ENCODE measurements at regions of chr6 and their contacts with region 1.

Region 1: GRCh38 chr6:39166189-39166911 is 51.4 kb upstream of the SAYSD1 start:
- DNase-seq: peak; percentile 28
- ATAC-seq: peak; percentile 96
- H3K4me3 ChIP-seq: no peak overlapping the region
- H3K27ac ChIP-seq: no peak overlapping the region
- H3K4me1 ChIP-seq: no peaks in the 10 kb centered on the region
- H3K27me3 ChIP-seq: no peaks in the 10 kb centered on the region
- CTCF ChIP-seq: peak; percentile 94

Region 2: DNA sequence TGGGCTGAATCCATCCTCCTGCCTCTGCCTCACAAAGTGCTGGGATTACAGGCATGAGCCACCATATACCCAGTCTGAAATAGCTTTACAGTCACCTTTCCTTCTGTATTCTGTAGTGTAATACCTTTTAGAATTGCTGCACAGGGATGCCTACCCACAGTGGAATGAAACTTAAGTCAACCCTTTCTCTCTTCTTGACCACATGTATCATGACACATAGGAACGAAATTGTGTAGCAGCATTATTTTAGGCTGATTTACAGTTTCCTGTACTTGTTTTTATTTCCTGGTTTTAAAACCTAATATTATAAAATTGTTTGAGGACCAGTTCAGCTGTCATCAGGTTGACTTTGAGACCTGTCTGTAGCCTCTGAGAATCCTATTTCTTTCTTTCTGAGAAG is 1049.1 kb before region 1 on chr6:
- CTCF ChIA-PET with region 1: no interaction called
- POLR2A ChIA-PET with region 1: interaction called, 19 read pairs
- in situ Hi-C with region 1: no loop called
- intact Hi-C with region 1: no loop called
- DNase-seq: no peak
- ATAC-seq: no peak
- H3K4me3 ChIP-seq: no peak overlapping the region
- H3K27ac ChIP-seq: no peak overlapping the region
- H3K4me1 ChIP-seq: no peaks in the 10 kb centered on the region
- H3K27me3 ChIP-seq: no peaks in the 10 kb centered on the region
- CTCF ChIP-seq: no peak

Region 3: DNA sequence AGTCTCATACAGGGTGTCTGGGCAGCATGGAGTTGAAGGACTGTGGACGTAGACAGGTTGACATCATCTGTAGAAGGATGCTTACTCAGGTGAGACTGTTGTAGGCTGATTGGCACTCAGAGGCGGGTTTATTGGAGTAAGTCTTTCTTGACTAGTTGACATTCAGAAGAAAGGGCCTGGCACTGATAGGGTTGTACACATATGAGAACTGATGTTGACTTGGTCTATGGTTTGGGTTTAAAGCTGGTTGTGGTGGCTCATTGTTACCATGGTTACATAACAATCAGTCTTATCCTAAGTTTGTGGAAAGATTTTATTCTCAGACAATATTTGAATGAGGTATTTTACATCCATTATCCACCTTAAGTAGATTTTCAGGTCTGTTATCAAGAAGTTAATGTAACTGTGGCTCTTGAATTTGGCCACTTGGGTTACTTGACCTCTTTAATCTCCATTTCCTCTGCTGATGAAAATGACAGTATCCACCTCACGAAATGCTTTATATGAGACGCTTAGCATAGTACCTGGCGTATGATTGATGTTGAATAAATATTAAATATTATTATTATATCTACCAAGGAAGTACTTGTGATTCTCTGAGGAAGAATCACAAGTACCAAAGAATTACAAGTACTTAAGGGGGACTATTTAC is 342.0 kb before region 1 on chr6:
- CTCF ChIA-PET with region 1: no interaction called
- POLR2A ChIA-PET with region 1: no interaction called
- in situ Hi-C with region 1: no loop called
- intact Hi-C with region 1: no loop called
- DNase-seq: no peak
- ATAC-seq: no peak
- H3K4me3 ChIP-seq: no peak overlapping the region
- H3K27ac ChIP-seq: no peak overlapping the region
- H3K4me1 ChIP-seq: no peaks in the 10 kb centered on the region
- H3K27me3 ChIP-seq: peaks cover 5% of the 10 kb centered on the region; the same call in 1 of the 2 replicates
- CTCF ChIP-seq: no peak

Region 4: GRCh38 chr6:39037082-39037508 is 129.3 kb before region 1 on chr6:
- CTCF ChIA-PET with region 1: interaction called, 10 read pairs
- POLR2A ChIA-PET with region 1: no interaction called
- in situ Hi-C with region 1: no loop called
- intact Hi-C with region 1: no loop called
- DNase-seq: no peak
- ATAC-seq: no peak
- H3K4me3 ChIP-seq: no peak overlapping the region
- H3K27ac ChIP-seq: no peak overlapping the region
- H3K4me1 ChIP-seq: no peaks in the 10 kb centered on the region
- H3K27me3 ChIP-seq: peaks cover 48% of the 10 kb centered on the region
- CTCF ChIP-seq: no peak

Region 5: GRCh38 chr6:39302669-39303424 is 136.5 kb after region 1 on chr6:
- CTCF ChIA-PET with region 1: interaction called, 5 read pairs
- POLR2A ChIA-PET with region 1: no interaction called
- in situ Hi-C with region 1: no loop called
- intact Hi-C with region 1: loop called (anchors 1 kb)
- DNase-seq: peak; percentile 36
- ATAC-seq: peak; percentile 95
- H3K4me3 ChIP-seq: peak overlapping the region in 1 of 2 experiments; percentile 19; a peak in 1 of 4 replicates
- H3K27ac ChIP-seq: no peak overlapping the region
- H3K4me1 ChIP-seq: no peaks in the 10 kb centered on the region
- H3K27me3 ChIP-seq: peaks cover 2% of the 10 kb centered on the region; the same call in 1 of the 2 replicates
- CTCF ChIP-seq: peak; percentile 91